SK-N-SH (cell line): ENCODE measurements at regions of chr12 and their contacts with region 1.

Region 1: GRCh38 chr12:114684098-114684869 is at the start of gene TBX3:
- DNase-seq: peak; percentile 95
- H3K4me3 ChIP-seq: peak within 1 kb of the TSS; percentile 78 to 96
- H3K27ac ChIP-seq: peak within 1 kb of the TSS; percentile 96
- H3K4me1 ChIP-seq: peaks cover 0 to 15% of the 10 kb centered on the region in 2 experiments; a peak in 2 of 4 replicates
- H3K27me3 ChIP-seq: no peaks in the 10 kb centered on the region; the same call in 1 of the 2 replicates
- CTCF ChIP-seq: peak; percentile 57
- EP300 ChIP-seq: no peak; a peak in 2 of 4 replicates
- RAD21 ChIP-seq: peak; percentile 62
- polyA plus RNA-seq, gene TBX3: 10.2 and 11.3 TPM in 2 replicates

Region 2: GRCh38 chr12:114668151-114668885 is 16.0 kb before region 1 on chr12:
- CTCF ChIA-PET with region 1: interaction called, 117 read pairs
- POLR2A ChIA-PET with region 1: interaction called, 77 read pairs
- DNase-seq: peak; percentile 92
- H3K4me3 ChIP-seq: peak overlapping the region; percentile 59 to 77
- H3K27ac ChIP-seq: peak overlapping the region in 1 of 2 experiments; percentile 89; a peak in 3 of 4 replicates
- H3K4me1 ChIP-seq: peaks cover 0 to 27% of the 10 kb centered on the region in 2 experiments; a peak in 2 of 4 replicates
- H3K27me3 ChIP-seq: no peaks in the 10 kb centered on the region
- CTCF ChIP-seq: peak; percentile 62
- EP300 ChIP-seq: no peak
- RAD21 ChIP-seq: peak; percentile 86

Region 3: GRCh38 chr12:114868995-114869834 is 184.9 kb after region 1 on chr12:
- CTCF ChIA-PET with region 1: interaction called, 8 read pairs
- POLR2A ChIA-PET with region 1: interaction called, 12 read pairs
- DNase-seq: peak; percentile 75
- H3K4me3 ChIP-seq: no peak overlapping the region
- H3K27ac ChIP-seq: peak overlapping the region in 1 of 2 experiments; percentile 83; a peak in 2 of 4 replicates
- H3K4me1 ChIP-seq: peaks cover 0 to 10% of the 10 kb centered on the region in 2 experiments; a peak in 2 of 4 replicates
- H3K27me3 ChIP-seq: no peaks in the 10 kb centered on the region
- CTCF ChIP-seq: no peak
- EP300 ChIP-seq: peak in 1 of 2 experiments; percentile 71; a peak in 2 of 4 replicates
- RAD21 ChIP-seq: 0 out of 2 replicates have a peak, but pooled peaks have one; percentile 1

Region 4: DNA sequence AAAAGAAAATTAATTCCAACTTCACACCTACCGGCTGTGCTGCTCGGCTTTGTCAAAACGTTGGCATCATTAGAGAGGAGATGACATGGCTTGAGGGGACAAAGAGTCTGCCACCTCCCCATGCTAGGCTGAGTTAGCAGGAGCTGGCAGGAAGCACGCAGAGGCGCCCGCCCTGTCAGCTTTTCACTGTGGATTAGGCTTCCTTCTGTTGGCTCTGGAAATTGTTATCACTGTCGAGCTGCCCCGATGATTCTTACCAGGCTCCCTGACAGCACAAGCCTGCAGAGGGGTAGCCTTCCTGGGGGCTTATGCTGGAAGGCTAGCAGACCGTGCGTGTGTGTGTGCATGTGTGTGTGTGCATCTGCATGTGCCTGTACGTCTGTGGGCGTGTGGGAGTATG is 490.6 kb after region 1 on chr12:
- CTCF ChIA-PET with region 1: interaction called, 5 read pairs
- POLR2A ChIA-PET with region 1: interaction called, 17 read pairs
- DNase-seq: peak; percentile 76
- H3K4me3 ChIP-seq: no peak overlapping the region
- H3K27ac ChIP-seq: peak overlapping the region in 1 of 2 experiments; percentile 98; a peak in 3 of 4 replicates
- H3K4me1 ChIP-seq: peaks cover 0 to 22% of the 10 kb centered on the region in 2 experiments; a peak in 2 of 4 replicates
- H3K27me3 ChIP-seq: no peaks in the 10 kb centered on the region
- CTCF ChIP-seq: no peak
- EP300 ChIP-seq: peak in 1 of 2 experiments; percentile 96; a peak in 2 of 4 replicates
- RAD21 ChIP-seq: peak; percentile 53

Region 5: DNA sequence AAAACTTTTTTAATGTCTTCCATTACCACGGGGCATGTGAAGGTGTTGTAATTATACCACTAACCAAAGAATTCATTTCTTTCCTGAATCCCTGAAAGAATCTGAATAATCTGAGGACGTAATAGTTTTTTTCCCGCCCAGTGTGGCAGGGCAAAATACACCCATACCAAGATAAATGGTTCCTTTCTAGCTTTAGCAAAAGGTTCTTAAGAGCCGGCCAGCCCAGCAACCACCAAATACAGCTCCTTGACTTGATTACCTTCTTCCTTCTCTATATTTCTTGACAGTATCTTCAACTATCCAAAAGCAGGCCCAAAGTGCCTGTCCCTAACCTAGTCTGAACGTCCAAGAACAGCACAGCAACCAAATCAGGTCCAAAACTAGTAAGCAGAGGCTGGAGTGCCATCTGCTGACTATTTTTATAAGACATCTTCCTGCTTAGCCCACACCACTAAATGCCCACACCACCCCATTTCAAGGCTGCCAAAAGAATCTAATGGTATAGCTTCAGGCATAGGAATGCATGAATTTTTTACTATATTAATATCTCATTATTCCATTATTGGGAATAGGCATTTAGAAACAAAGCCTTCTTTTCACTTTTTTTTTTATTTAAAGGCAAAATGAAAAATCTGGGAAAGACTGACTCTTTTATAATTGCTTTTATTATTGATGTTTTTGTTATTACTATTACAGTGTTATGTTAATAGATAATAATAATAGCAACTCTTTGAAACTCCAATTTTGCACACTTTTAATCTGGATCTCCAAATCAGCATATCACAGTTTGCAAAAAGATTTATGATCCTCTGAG is 1068.8 kb after region 1 on chr12:
- CTCF ChIA-PET with region 1: interaction called, 31 read pairs
- POLR2A ChIA-PET with region 1: interaction called, 6 read pairs
- DNase-seq: peak; percentile 55
- H3K4me3 ChIP-seq: no peak overlapping the region; a peak in 1 of 4 replicates
- H3K27ac ChIP-seq: peak overlapping the region in 1 of 2 experiments; percentile 43; a peak in 1 of 4 replicates
- H3K4me1 ChIP-seq: peaks cover 0 to 8% of the 10 kb centered on the region in 2 experiments; a peak in 1 of 4 replicates
- H3K27me3 ChIP-seq: no peaks in the 10 kb centered on the region; the same call in none of the 2 replicates
- CTCF ChIP-seq: peak; percentile 74
- EP300 ChIP-seq: no peak
- RAD21 ChIP-seq: peak; percentile 96